Tibial artery (tissue), 4 donors: ENCODE measurements at regions of chr13 and their contacts with region 1.

Region 1: GRCh38 chr13:48580185-48580803 is 47.4 kb upstream of the RCBTB2 start:
- DNase-seq: peak; percentile 79 to 84
- H3K4me3 ChIP-seq: no peak overlapping the region
- H3K27ac ChIP-seq: no peak overlapping the region
- H3K4me1 ChIP-seq: peaks cover 0 to 14% (median 6%) of the 10 kb centered on the region in 4 donors
- H3K27me3 ChIP-seq: no peaks in the 10 kb centered on the region
- CTCF ChIP-seq: peak; percentile 66 to 81

Region 2: DNA sequence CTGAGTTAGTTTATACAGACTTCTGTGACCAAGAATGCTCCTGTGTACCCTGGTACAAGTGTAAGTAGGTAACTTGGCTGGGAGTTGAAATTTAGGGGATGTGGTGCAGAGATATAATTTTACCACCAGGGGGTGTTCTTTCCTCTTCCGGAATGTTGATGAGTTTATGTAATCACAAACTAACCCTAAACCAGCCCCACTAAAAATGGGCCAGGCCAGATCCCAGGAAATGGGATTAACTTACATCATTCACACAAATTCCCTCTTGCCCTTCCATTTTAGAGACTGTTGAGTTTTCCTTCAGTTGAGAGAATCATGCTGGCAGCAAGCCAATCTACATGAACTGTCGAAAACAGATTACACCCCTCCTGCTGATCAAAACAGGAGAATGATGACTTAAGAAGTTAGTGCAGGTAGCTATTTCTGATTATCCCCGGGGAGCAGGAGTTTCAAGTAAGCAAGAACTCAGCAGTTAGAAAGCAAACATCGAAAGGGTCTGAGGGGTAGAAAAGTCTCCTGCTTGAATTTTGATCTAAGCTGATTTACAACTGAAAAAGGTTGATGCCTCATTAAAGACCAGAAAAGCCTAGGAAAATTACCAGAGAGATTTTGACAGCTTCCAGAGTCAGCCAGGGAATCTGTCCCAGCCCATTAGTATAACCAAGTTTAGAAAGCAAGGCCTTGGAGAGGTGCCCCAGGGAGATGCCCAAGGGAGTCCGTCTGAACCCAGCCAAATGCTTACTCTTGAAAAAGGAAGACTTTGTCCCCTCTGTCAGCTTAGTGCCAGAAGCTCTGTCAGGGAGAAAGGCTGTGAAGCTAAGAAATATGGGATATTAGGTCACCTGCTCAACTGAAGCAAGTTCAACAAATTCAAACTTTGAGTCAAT is 453.1 kb before region 1 on chr13:
- intact Hi-C with region 1: loop called (anchors 10 kb)
- DNase-seq: peak; percentile 82 to 93
- H3K4me3 ChIP-seq: peak overlapping the region in 1 of 2 donors; percentile 8
- H3K27ac ChIP-seq: peak overlapping the region; percentile 76 to 83
- H3K4me1 ChIP-seq: peaks cover 0 to 37% (median 28%) of the 10 kb centered on the region in 4 donors
- H3K27me3 ChIP-seq: no peaks in the 10 kb centered on the region
- CTCF ChIP-seq: peak; percentile 70 to 73

Region 3: DNA sequence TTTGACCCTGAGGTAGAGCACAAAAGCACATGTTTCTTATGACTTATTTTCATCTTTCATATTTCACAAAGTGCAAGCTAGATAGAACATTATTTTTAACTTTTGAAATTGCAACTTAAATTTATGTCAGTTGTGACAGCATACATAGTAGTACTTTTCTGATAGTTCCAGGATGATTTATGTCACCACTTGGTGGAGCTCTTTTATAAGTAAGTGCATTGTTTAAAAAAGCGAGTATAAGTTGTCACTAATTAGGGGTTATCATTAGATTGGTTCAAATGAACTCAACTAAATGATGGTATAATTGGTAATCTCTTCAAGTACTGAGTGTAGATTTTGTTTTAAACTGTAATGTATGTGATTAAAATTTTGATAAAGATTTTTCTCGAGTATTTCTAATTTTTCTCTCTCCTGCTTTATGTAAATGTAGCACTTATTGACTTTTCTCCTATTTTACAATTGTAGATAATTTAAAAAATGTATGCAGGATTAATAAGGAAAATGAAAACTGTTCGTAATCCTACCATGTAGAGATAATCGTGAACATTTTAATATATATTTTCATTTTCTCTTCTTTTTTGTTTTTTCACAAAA is 245.7 kb before region 1 on chr13:
- intact Hi-C with region 1: loop called (anchors 5 kb)
- DNase-seq: no peak
- H3K4me3 ChIP-seq: no peak overlapping the region
- H3K27ac ChIP-seq: no peak overlapping the region
- H3K4me1 ChIP-seq: peaks cover 0 to 6% (median 0%) of the 10 kb centered on the region in 4 donors
- H3K27me3 ChIP-seq: no peaks in the 10 kb centered on the region
- CTCF ChIP-seq: peak; percentile 54 to 64